Posterior vena cava (tissue), 2 donors: ENCODE measurements at regions of chr9 and their contacts with region 1.

Region 1: GRCh38 chr9:71285191-71285656 is 163.8 kb upstream of the TRPM3 start:
- DNase-seq: no peak

Region 2: GRCh38 chr9:71795097-71795813 is 510.0 kb after region 1 on chr9:
- intact Hi-C with region 1: loop called in 1 of 2 experiments (anchors 5 kb)
- DNase-seq: no peak